ENCODE measurements at regions of chr11 and their contacts with region 1.

Region 1: GRCh38 chr11:59437770-59438169 is 1.5 kb downstream of the OR5A1 start:
- DNase-seq: peak; percentile 75
- H3K4me3 ChIP-seq: no peak overlapping the region
- H3K27ac ChIP-seq: no peak overlapping the region
- H3K4me1 ChIP-seq: peaks cover 6% of the 10 kb centered on the region
- H3K27me3 ChIP-seq: no peaks in the 10 kb centered on the region
- CTCF ChIP-seq: no peak

Region 2: DNA sequence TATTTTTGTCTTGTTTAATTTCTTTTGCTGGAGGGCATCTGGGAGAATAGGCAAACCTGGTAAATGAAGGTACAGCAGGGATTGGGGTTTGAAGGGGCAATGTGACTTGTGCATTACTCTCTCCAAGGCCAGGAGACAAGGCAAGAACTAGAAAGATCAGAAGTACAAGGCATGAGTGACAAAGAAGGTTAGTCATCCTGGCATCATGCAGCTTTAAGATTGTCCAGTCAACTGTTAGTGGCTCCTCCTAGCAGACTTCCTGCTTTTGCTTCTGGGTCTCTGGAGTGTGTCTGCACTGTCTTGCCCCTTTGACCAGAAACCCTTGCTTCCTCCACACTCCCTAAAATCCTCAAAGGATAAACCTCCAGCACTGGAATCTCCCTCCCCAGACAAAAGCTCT is 525.6 kb before region 1 on chr11:
- CTCF ChIA-PET with region 1: no interaction called
- POLR2A ChIA-PET with region 1: no interaction called
- intact Hi-C with region 1: no loop called
- DNase-seq: no peak
- H3K4me3 ChIP-seq: no peak overlapping the region
- H3K27ac ChIP-seq: no peak overlapping the region
- H3K4me1 ChIP-seq: no peaks in the 10 kb centered on the region
- H3K27me3 ChIP-seq: peaks cover 18% of the 10 kb centered on the region
- CTCF ChIP-seq: no peak

Region 3: DNA sequence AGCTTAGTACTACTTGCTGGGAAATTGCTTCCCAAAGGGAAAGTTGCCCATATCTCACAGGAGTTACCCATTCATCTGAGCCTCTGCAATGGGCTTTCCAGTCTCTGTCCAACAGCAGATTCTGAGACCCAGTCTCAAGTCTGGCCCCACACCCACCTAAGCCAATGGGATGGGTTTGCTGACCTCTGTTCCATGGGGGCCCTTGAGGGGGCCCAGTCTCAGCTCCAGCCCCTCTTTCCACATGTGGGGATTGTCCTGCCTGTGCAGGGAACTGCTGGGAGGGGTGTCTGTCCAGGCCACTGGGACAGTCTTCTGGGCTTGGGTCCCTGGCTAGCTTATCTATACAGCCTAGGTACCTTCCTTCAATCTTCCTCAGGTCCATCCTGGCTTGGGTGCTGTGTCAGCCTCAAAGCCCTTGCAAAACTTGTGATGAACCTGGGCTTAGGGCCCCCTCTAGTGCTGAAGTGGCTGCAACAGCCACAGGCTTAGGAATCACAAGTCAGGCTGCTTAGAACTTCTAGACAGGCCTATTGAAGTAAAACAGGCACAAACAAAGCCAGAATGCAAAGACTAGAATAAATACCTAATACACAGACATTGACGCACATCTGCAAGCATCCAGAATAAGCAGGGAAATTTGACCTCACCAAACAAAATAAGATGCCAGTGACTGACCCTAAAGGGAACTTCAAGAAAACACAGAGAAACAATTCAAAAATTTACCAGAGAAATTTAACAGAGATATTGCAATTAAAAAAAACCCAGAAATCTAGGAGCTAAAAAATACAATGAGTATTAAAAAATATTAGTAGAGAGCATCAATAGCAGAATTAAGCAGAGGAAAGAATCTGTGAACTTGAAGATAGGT is 242.8 kb after region 1 on chr11:
- CTCF ChIA-PET with region 1: no interaction called
- POLR2A ChIA-PET with region 1: no interaction called
- intact Hi-C with region 1: loop called (anchors 5 kb)
- DNase-seq: peak; percentile 90
- H3K4me3 ChIP-seq: no peak overlapping the region
- H3K27ac ChIP-seq: no peak overlapping the region
- H3K4me1 ChIP-seq: peaks cover 13% of the 10 kb centered on the region
- H3K27me3 ChIP-seq: no peaks in the 10 kb centered on the region
- CTCF ChIP-seq: peak; percentile 98

Measured in A673 (cell line).